ENCODE measurements at regions of chr2 and their contacts with region 1.

Region 1: DNA sequence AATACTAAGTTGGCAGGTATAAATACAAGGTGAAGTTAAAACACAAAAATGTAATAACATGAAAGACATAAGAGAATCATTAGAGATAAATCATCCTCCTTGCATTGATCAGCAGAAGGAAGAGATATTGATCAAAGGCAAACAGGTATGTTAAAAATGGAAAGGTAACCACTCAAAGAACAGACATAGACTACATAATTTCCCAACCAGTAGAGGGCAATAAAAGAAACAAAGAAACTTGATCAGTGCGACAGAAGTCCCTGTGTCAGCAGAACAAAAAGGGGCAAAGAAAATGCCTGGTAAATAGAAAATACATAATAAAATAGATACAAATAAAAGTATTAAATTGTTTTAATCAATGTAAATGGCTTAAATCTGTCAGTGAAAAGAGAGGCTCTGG is 53.6 kb downstream of the FAM228A start:
- DNase-seq: peak; percentile 35
- ATAC-seq: peak; percentile 74
- H3K4me3 ChIP-seq: no peak overlapping the region
- H3K27ac ChIP-seq: no peak overlapping the region
- H3K4me1 ChIP-seq: no peaks in the 10 kb centered on the region
- H3K27me3 ChIP-seq: no peaks in the 10 kb centered on the region
- CTCF ChIP-seq: peak; percentile 52
- EP300 ChIP-seq: no peak
- POLR2A ChIP-seq: no peak
- RAD21 ChIP-seq: peak; percentile 14; the same call in 1 of the 2 replicates

Region 2: DNA sequence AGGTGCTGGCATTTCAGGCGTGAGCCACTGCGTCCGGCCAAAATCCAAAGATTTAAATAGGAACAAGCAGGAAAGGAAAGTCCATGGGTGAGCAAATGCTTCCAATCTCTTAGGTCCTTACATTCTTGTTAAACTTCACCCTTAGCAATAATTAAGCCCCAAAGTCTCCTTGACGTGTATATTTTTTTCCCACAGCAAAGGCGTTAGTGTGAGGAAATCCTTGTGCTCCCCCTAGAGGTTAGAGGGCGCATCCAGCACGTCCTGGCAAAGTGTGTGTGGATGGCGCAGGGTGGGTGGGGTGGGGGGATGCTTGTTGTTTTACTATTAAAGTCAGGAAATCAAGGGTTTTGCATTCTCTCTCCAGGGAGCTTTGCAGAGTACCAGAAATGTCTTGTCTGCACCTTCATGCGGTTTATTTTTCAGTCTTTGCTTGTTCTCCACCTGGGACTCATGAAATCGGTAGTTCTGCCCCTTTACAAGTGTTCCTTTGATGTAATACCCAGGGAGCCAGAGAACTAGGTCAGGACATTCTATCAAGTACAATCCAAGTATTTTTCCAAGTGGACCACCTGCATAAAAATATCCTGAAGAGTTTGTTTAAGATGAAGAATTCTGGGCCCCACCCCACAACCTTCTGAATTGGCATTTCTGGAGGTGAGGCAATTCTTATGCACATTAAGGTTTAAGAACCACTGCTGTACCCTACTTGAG is 154.0 kb after region 1 on chr2:
- CTCF ChIA-PET with region 1: no interaction called
- POLR2A ChIA-PET with region 1: no interaction called
- in situ Hi-C with region 1: no loop called
- intact Hi-C with region 1: loop called (anchors 5 kb)
- DNase-seq: no peak
- ATAC-seq: peak; percentile 84
- H3K4me3 ChIP-seq: no peak overlapping the region
- H3K27ac ChIP-seq: no peak overlapping the region
- H3K4me1 ChIP-seq: peaks cover 11% of the 10 kb centered on the region
- H3K27me3 ChIP-seq: no peaks in the 10 kb centered on the region
- CTCF ChIP-seq: peak; percentile 67
- EP300 ChIP-seq: no peak
- POLR2A ChIP-seq: no peak
- RAD21 ChIP-seq: no peak